Caco-2 (cell line): ENCODE measurements at regions of chr4 and their contacts with region 1.

Region 1: DNA sequence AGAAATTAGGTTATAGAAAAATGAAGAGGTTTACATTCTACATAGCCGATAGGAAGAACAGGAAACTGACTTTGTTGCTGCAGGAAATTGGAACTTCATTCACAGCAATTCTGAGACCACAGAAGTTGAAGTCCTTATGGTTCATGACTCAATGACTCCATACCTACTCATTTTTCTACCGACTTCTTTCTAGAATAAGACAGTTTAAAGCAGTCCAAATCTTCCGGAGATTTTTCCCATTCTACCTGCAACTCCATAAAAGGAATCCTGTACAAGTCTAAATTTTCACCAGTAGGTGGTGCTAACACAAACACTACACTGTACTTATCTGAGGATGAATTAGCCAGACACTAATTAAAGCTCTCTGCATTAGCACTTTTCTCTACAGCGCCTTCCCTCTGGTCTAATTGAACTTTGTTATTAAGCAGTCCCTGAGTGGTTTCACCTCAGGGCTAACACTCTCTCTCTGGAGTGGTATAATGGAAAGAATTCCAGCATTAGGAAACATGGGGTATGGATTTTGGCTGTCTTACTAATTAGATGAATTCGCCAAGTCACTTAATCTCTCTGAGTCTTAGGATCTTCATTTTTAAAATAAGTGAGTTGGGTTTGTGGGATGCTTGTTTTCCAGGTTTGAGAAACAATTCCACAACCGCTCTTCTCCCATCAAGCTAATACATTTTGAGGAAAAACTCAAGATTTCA is 167.9 kb downstream of the SMIM20 start:
- DNase-seq: peak in 1 of 2 experiments; percentile 41
- H3K4me3 ChIP-seq: no peak overlapping the region
- H3K4me3 Mint-ChIP-seq: no peak overlapping the region
- H3K27ac Mint-ChIP-seq: no peak overlapping the region
- H3K4me1 ChIP-seq: no peaks in the 10 kb centered on the region
- H3K4me1 Mint-ChIP-seq: no peaks in the 10 kb centered on the region
- H3K27me3 ChIP-seq: no peaks in the 10 kb centered on the region
- H3K27me3 Mint-ChIP-seq: no peaks in the 10 kb centered on the region
- CTCF ChIP-seq: peak; percentile 63 to 75

Region 2: GRCh38 chr4:25536564-25537325 is 545.2 kb before region 1 on chr4:
- CTCF ChIA-PET with region 1: no interaction called
- POLR2A ChIA-PET with region 1: no interaction called
- intact Hi-C with region 1: no loop called
- DNase-seq: no peak
- H3K4me3 ChIP-seq: no peak overlapping the region
- H3K4me3 Mint-ChIP-seq: no peak overlapping the region
- H3K27ac Mint-ChIP-seq: no peak overlapping the region
- H3K4me1 ChIP-seq: no peaks in the 10 kb centered on the region
- H3K4me1 Mint-ChIP-seq: peaks cover 13% of the 10 kb centered on the region
- H3K27me3 ChIP-seq: no peaks in the 10 kb centered on the region
- H3K27me3 Mint-ChIP-seq: no peaks in the 10 kb centered on the region
- CTCF ChIP-seq: no peak

Region 3: DNA sequence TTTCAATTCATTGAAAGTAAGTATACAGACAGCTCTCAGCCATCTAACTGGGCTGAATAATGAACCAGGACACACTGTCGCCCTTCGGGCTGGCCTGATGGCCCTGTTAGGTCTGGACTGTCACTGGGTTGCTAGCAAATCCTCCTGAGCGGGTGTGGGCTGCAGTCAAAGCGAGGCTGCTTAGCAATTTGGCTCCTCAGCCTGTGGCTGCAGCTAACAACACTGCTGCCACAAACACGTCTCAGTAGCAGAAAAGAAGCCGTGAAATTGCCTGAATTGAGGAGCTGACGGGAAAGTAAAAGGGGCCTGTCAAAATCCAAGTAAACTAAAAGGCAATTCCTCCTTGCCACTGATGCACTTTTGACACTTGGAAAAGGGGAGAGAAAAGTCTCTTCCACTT is 95.1 kb before region 1 on chr4:
- CTCF ChIA-PET with region 1: no interaction called
- POLR2A ChIA-PET with region 1: no interaction called
- intact Hi-C with region 1: loop called (anchors 5 kb)
- DNase-seq: no peak
- H3K4me3 ChIP-seq: no peak overlapping the region
- H3K4me3 Mint-ChIP-seq: no peak overlapping the region
- H3K27ac Mint-ChIP-seq: no peak overlapping the region
- H3K4me1 ChIP-seq: no peaks in the 10 kb centered on the region
- H3K4me1 Mint-ChIP-seq: no peaks in the 10 kb centered on the region
- H3K27me3 ChIP-seq: no peaks in the 10 kb centered on the region
- H3K27me3 Mint-ChIP-seq: no peaks in the 10 kb centered on the region
- CTCF ChIP-seq: no peak

Region 4: GRCh38 chr4:26161030-26161824 is 79.3 kb after region 1 on chr4:
- CTCF ChIA-PET with region 1: interaction called, 12 read pairs
- POLR2A ChIA-PET with region 1: no interaction called
- intact Hi-C with region 1: loop called (anchors 1 kb)
- DNase-seq: peak in 1 of 2 experiments; percentile 11
- H3K4me3 ChIP-seq: no peak overlapping the region
- H3K4me3 Mint-ChIP-seq: no peak overlapping the region
- H3K27ac Mint-ChIP-seq: no peak overlapping the region
- H3K4me1 ChIP-seq: no peaks in the 10 kb centered on the region
- H3K4me1 Mint-ChIP-seq: peaks cover 6% of the 10 kb centered on the region
- H3K27me3 ChIP-seq: no peaks in the 10 kb centered on the region
- H3K27me3 Mint-ChIP-seq: no peaks in the 10 kb centered on the region
- CTCF ChIP-seq: peak; percentile 24 to 61

Region 5: DNA sequence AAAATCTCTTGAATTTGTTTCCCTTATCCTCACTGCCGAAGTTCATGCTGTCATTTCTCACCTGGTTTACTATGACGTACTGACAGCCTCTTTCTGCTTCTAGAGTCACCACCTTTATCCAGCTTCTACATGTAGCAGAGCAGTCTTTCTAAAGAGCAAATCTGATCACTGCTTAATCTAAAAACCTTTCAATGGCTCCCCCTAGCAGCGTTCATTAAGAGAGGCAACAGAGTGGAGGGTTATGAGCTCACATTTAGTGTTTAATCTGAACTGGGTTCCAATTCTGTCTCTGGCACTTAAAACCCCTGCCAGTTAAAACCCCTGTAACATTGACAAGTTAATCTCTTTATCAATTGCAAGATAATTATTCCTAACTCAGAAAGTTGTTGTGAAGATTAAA is 243.2 kb after region 1 on chr4:
- CTCF ChIA-PET with region 1: interaction called, 6 read pairs
- POLR2A ChIA-PET with region 1: no interaction called
- intact Hi-C with region 1: loop called (anchors 1 kb)
- DNase-seq: peak in 1 of 2 experiments; percentile 20
- H3K4me3 ChIP-seq: no peak overlapping the region
- H3K4me3 Mint-ChIP-seq: no peak overlapping the region
- H3K27ac Mint-ChIP-seq: no peak overlapping the region
- H3K4me1 ChIP-seq: peaks cover 12% of the 10 kb centered on the region; the same call in 1 of the 2 replicates
- H3K4me1 Mint-ChIP-seq: peaks cover 12% of the 10 kb centered on the region
- H3K27me3 ChIP-seq: no peaks in the 10 kb centered on the region
- H3K27me3 Mint-ChIP-seq: no peaks in the 10 kb centered on the region
- CTCF ChIP-seq: peak in 1 of 2 experiments; percentile 10